ENCODE measurements at regions of chr5 and their contacts with region 1.

Region 1: GRCh38 chr5:88997937-88998336 is 115.0 kb upstream of the MEF2C start:
- DNase-seq: peak in 1 of 7 donors; percentile 8
- H3K4me3 ChIP-seq: no peak overlapping the region
- H3K27ac ChIP-seq: no peak overlapping the region
- H3K4me1 ChIP-seq: no peaks in the 10 kb centered on the region
- H3K27me3 ChIP-seq: no peaks in the 10 kb centered on the region
- CTCF ChIP-seq: no peak
- POLR2A ChIP-seq: no peak

Region 2: GRCh38 chr5:88729084-88729828 is 268.7 kb before region 1 on chr5:
- intact Hi-C with region 1: loop called in 1 of 2 experiments (anchors 5 kb)
- DNase-seq: peak; percentile 62 to 92 (median 78)
- H3K4me3 ChIP-seq: no peak overlapping the region
- H3K27ac ChIP-seq: no peak overlapping the region
- H3K4me1 ChIP-seq: peaks cover 26 to 44% of the 10 kb centered on the region in 2 donors
- H3K27me3 ChIP-seq: no peaks in the 10 kb centered on the region
- CTCF ChIP-seq: peak; percentile 77 to 87 (median 80)
- POLR2A ChIP-seq: no peak

Region 3: GRCh38 chr5:89128092-89128491 is 130.2 kb after region 1 on chr5:
- intact Hi-C with region 1: no loop called
- DNase-seq: no peak
- H3K4me3 ChIP-seq: no peak overlapping the region
- H3K27ac ChIP-seq: no peak overlapping the region
- H3K4me1 ChIP-seq: no peaks in the 10 kb centered on the region
- H3K27me3 ChIP-seq: no peaks in the 10 kb centered on the region
- CTCF ChIP-seq: no peak
- POLR2A ChIP-seq: no peak

Measured in adrenal gland (tissue), 19 donors.